Right ventricle myocardium superior (tissue), 1 donor: ENCODE measurements at regions of chr12 and their contacts with region 1.

Region 1: DNA sequence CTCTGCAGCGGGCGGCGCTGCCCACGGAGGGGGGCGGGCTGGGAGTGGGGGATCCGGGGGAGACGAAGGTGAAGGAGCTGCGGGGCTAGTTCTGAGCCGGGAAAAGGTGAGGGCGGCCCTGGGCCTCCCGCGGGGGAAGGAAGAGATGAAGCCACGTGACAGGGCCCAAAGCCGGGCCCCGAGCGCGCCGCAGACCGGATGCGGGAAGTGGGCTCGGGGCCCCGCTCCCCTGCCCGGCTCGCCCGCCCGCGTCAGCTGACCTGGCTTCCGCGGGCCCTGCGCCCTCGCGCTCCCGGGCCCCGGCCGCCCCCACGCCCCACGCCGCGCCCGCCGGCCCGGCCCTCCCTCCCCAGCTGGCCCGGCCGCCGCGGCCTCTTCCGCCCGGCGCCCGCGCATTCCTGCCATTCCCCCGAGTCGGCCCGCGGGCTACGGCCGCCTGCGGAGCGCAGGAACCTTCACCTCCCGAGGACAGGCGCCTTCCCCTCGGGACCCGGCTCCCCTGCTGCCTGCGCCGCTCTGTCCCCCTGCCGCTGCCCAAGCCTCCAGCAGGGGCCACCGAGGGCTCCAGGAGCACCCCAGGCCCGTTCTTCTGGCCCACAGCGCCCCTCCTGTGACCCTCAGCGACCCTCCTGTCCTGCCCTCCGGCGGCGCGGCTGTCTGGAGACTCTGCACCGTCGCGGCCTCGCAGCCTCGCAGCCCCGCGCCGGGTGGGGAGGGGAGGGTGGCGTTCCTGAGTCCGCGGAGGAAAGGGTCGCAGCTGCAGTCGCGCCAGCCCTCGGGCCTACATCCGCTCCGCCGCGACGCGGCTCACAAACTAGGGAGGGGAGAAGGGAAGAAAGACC is 20.4 kb downstream of the NINJ2 start:
- DNase-seq: peak; percentile 89
- ATAC-seq: peak; percentile 73

Region 2: GRCh38 chr12:575948-576612 is 66.8 kb before region 1 on chr12:
- intact Hi-C with region 1: loop called (anchors 5 kb)
- DNase-seq: peak; percentile 92
- ATAC-seq: peak; percentile 69